Tibial artery (tissue), 4 donors: ENCODE measurements at regions of chr1 and their contacts with region 1.

Region 1: DNA sequence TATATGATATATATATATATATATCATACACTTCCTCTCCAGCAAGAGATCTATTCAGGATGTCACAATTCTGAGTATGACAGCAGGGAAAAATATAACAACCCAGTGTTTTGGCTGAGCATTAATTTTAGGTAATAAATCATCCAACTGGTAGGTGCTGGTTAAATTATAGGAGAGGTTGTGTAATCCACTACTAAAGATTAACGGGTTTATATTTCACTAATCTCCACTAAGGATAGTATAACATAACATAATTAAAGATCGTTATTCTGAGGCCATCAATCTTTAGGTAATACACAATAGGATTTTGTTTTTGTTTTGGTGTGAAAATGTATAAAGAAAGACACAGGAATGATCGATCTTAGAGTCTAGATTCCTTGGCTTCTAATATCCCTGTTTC is 102.2 kb downstream of the COQ8A start:
- DNase-seq: no peak
- H3K4me3 ChIP-seq: no peak overlapping the region
- H3K27ac ChIP-seq: no peak overlapping the region
- H3K4me1 ChIP-seq: no peaks in the 10 kb centered on the region
- H3K27me3 ChIP-seq: no peaks in the 10 kb centered on the region
- CTCF ChIP-seq: no peak

Region 2: GRCh38 chr1:226903819-226904716 is 138.2 kb before region 1 on chr1:
- intact Hi-C with region 1: loop called (anchors 1 kb)
- DNase-seq: peak in 1 of 2 donors; percentile 50
- H3K4me3 ChIP-seq: no peak overlapping the region
- H3K27ac ChIP-seq: no peak overlapping the region
- H3K4me1 ChIP-seq: peaks cover 0 to 10% (median 2%) of the 10 kb centered on the region in 4 donors
- H3K27me3 ChIP-seq: no peaks in the 10 kb centered on the region
- CTCF ChIP-seq: no peak

Region 3: GRCh38 chr1:226973898-226974543 is 68.3 kb before region 1 on chr1:
- intact Hi-C with region 1: no loop called
- DNase-seq: peak; percentile 79 to 87
- H3K4me3 ChIP-seq: peak overlapping the region in 1 of 2 donors; percentile 20
- H3K27ac ChIP-seq: peak overlapping the region; percentile 89
- H3K4me1 ChIP-seq: peaks cover 0 to 36% (median 30%) of the 10 kb centered on the region in 4 donors
- H3K27me3 ChIP-seq: no peaks in the 10 kb centered on the region
- CTCF ChIP-seq: no peak

Region 4: GRCh38 chr1:227072991-227073390 is 30.7 kb after region 1 on chr1:
- intact Hi-C with region 1: no loop called
- DNase-seq: no peak
- H3K4me3 ChIP-seq: no peak overlapping the region
- H3K27ac ChIP-seq: no peak overlapping the region
- H3K4me1 ChIP-seq: no peaks in the 10 kb centered on the region
- H3K27me3 ChIP-seq: no peaks in the 10 kb centered on the region
- CTCF ChIP-seq: no peak